ENCODE measurements at regions of chr4 and their contacts with region 1.

Region 1: GRCh38 chr4:19224820-19225219 is 1026.9 kb upstream of the SLIT2 start:
- DNase-seq: no peak
- ATAC-seq: no peak
- H3K4me3 ChIP-seq: no peak overlapping the region
- H3K27ac ChIP-seq: no peak overlapping the region
- H3K4me1 ChIP-seq: no peaks in the 10 kb centered on the region
- H3K27me3 ChIP-seq: no peaks in the 10 kb centered on the region

Region 2: DNA sequence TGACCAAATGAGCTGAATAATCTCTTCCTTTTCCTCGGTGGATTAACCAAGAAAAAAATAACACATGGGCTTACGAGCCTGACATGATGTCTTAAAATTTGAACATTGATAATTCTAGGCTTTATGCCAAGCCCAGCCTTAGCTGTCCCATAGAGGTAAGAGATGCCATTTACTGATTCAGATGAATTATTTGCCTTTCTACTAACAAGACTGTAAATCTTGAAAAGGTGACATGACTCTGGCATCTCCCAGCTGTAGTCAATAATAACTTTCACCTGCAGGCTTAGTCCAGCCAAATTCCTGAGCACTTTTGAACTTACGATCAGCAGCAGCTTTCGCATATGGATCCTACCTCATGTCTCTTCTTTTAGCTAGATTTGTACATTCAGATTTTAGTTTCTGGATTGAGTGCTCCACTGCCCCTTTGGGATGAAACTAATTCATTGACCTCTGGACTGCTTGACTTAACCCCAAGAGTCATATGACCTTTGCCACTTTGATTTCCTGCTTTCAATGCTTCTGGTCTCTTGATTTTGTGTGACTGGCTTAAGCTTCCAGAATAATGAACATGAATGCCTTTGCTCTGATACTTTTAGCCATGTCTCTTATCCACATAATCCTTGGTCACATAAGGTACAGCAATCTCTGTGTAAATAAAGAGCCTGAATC is 150.4 kb after region 1 on chr4:
- intact Hi-C with region 1: no loop called
- DNase-seq: no peak
- ATAC-seq: no peak
- H3K4me3 ChIP-seq: no peak overlapping the region
- H3K27ac ChIP-seq: no peak overlapping the region
- H3K4me1 ChIP-seq: no peaks in the 10 kb centered on the region
- H3K27me3 ChIP-seq: no peaks in the 10 kb centered on the region

Region 3: DNA sequence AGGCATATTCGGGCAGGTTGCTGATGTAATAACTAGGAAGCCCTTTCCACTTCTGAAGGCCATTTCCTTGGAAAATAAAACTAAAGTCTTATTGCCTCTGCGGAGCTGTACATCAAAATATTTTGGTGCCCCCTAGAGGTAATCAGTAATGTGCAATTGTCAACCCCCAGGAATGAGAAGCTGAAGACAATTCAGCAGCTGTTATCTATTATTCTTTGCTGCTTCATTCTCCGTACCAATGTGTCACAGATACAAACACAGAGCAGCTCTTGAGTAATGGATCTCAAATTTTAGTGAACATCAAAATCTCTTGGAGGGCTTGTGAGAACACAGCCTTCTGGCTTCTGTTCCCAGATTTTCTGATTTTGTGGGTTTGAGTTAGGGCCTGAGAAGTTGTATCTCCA is 1023.3 kb after region 1 on chr4:
- intact Hi-C with region 1: loop called in 1 of 2 experiments (anchors 10 kb)
- DNase-seq: no peak
- ATAC-seq: no peak
- H3K4me3 ChIP-seq: no peak overlapping the region
- H3K27ac ChIP-seq: no peak overlapping the region
- H3K4me1 ChIP-seq: no peaks in the 10 kb centered on the region
- H3K27me3 ChIP-seq: no peaks in the 10 kb centered on the region